Activated CD8-positive, alpha-beta T cell treated with anti-CD3 and anti-CD28 coated beads, Interleukin-2, amount 10 ng/mL, durations not matched to agents 7 days and 5 days (primary cell): ENCODE measurements at regions of chr18 and their contacts with region 1.

Region 1: DNA sequence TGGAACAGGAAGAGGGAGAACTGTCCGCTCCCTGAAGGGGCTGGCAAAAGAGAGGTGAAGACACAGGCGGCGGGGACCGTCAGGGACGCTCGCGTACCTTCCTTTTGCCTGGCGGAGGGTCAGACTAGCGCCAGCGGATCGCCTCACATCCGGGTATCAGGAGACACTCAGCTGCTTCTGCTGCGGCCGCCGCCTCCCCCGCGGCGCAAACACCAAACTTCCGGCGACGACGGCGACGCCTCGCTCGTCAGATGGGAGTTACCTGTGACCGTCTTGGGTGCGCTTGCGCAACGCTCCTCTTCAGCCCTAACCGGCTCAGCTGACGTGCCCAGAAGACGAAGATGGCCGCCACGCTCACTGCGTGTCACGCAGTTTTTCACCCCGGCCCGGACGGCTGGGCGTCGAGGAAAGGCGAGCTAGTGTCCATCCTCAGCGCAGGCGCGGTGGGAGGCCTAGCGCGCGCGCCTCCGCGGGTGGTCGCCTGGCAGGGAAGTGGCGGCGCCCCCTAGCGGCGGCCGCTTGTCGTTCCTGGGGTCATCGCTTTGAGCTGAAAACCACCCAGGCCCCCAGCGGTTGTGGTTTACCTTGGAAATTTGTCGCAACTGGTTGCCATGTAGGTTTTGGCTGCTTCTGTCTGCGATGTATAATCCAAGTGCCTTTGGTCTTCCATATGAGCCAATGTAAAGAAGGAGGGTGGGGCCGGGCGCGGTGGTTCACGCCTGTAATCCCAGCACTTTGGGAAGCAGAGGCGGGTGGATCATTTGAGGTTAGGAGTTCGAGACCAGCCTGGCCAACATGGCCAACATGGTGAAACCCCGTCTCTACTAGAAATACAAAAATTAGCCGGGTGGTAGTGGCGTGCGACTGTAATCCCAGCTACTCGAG is at the start of gene ESCO1:
- DNase-seq: peak; percentile 96
- ATAC-seq: peak; percentile 90
- H3K4me3 Mint-ChIP-seq: peak within 1 kb of the TSS; percentile 92
- H3K27ac Mint-ChIP-seq: peak within 1 kb of the TSS; percentile 98
- H3K4me1 Mint-ChIP-seq: peaks cover 35% of the 10 kb centered on the region
- H3K27me3 Mint-ChIP-seq: no peaks in the 10 kb centered on the region
- total RNA-seq, gene ESCO1: 18.1 to 20.5 TPM

Region 2: GRCh38 chr18:21281611-21282010 is 319.2 kb before region 1 on chr18:
- CTCF ChIA-PET with region 1: no interaction called
- POLR2A ChIA-PET with region 1: no interaction called
- DNase-seq: no peak
- ATAC-seq: no peak
- H3K4me3 Mint-ChIP-seq: no peak overlapping the region
- H3K27ac Mint-ChIP-seq: no peak overlapping the region
- H3K4me1 Mint-ChIP-seq: no peaks in the 10 kb centered on the region
- H3K27me3 Mint-ChIP-seq: peaks cover 4% of the 10 kb centered on the region

Region 3: GRCh38 chr18:21404410-21404809 is 196.4 kb before region 1 on chr18:
- CTCF ChIA-PET with region 1: no interaction called
- POLR2A ChIA-PET with region 1: no interaction called
- DNase-seq: no peak
- ATAC-seq: no peak
- H3K4me3 Mint-ChIP-seq: no peak overlapping the region
- H3K27ac Mint-ChIP-seq: no peak overlapping the region
- H3K4me1 Mint-ChIP-seq: no peaks in the 10 kb centered on the region
- H3K27me3 Mint-ChIP-seq: peaks cover 6% of the 10 kb centered on the region

Region 4: GRCh38 chr18:21612125-21612991 is 11.6 kb after region 1 on chr18 and contains the start of gene SNRPD1:
- CTCF ChIA-PET with region 1: interaction called, 171 read pairs
- POLR2A ChIA-PET with region 1: interaction called, 85 read pairs
- DNase-seq: peak; percentile 91
- ATAC-seq: peak; percentile 97
- H3K4me3 Mint-ChIP-seq: peak within 1 kb of the TSS; percentile 100
- H3K27ac Mint-ChIP-seq: peak within 1 kb of the TSS; percentile 100
- H3K4me1 Mint-ChIP-seq: peaks cover 33% of the 10 kb centered on the region
- H3K27me3 Mint-ChIP-seq: peaks cover 2% of the 10 kb centered on the region
- total RNA-seq, gene SNRPD1: 102 to 114 TPM

Region 5: DNA sequence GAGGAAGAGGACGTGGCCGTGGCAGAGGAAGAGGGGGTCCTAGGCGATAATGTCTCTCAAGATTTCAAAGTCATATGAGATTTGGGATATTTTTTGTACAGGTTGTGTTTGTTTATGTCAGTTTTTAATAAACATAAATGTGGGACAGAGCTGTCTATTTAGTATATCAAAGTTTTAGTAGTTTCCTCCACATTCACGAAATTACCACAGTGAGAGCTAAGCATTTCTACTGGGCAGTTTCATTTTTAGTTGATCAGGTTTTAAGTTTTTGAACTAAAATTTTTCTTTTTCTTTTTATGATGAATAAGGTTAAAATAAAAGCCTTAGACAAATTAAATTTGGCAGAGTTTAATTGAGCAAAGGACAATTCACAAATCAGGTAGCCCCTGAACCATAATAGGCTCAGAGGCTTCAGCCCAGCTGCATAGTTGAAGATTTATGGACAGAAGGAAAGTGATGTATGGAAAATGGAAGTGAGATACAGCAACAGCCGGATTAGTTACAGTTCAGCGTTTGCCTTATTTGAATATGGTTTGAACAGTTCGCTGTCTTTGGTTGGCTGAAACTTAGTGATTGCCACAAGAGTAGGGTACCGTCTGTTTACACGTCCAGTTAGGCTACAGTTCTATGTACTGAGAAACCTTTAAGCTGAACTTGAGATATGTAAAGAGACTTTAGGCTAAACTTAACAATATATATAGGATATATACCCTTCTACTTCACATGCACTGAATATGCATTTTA is 28.5 kb after region 1 on chr18:
- CTCF ChIA-PET with region 1: interaction called, 15 read pairs
- POLR2A ChIA-PET with region 1: no interaction called
- DNase-seq: no peak
- ATAC-seq: no peak
- H3K4me3 Mint-ChIP-seq: peak overlapping the region; percentile 15
- H3K27ac Mint-ChIP-seq: peak overlapping the region; percentile 75
- H3K4me1 Mint-ChIP-seq: peaks cover 22% of the 10 kb centered on the region
- H3K27me3 Mint-ChIP-seq: no peaks in the 10 kb centered on the region

Region 6: DNA sequence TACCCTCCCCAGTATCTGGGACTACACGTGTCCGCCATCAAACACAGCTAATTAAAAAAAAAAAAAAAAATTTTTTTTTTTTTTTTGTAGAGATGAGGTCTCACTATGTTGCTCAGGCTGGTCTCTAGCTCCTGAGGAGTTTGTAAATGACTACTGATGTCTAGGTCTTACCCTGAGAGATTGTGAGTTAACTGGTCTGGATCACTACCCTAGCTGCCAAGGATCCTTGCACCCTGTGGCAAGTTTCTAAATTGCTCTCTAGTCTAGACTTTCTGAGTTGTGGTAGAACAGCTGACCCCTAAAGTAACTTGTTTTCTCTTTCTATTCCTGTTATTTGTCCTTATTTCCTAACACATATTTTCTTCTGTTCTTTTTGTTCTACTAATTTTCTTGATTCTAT is 59.3 kb after region 1 on chr18:
- CTCF ChIA-PET with region 1: no interaction called
- POLR2A ChIA-PET with region 1: no interaction called
- DNase-seq: no peak
- ATAC-seq: no peak
- H3K4me3 Mint-ChIP-seq: no peak overlapping the region
- H3K27ac Mint-ChIP-seq: no peak overlapping the region
- H3K4me1 Mint-ChIP-seq: no peaks in the 10 kb centered on the region
- H3K27me3 Mint-ChIP-seq: no peaks in the 10 kb centered on the region

Region 7: DNA sequence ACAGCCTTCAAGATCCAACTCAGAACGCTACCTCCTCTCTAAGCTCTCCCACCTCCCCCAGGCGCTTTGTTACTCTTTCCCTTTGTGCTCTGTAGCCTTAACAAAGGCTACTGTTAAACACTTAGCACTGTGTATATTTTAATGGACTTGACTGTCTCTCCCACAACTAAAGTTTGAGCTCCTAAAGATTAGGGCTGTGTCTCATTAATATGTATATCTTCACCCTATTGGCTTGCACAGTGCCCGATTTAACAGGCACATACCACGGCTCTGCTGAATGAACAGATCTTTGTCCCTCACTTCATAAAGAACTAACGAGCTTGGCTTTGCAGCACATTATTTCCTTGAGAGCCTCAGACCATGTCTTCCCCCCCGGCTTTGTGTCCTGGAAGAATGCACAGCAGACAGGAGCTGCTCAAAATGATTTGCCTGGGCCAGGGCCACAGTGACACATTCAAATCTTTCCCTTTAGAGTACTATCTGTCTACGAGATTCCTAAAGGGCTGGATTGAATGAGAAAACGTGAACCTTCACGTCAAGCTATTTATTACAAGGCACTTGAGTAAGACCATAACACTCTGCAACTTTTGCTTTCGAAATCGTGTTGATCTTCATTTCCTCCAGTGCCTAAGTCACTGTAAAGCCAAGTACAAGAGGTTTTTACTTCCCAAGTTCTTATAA is 81.7 kb after region 1 on chr18:
- CTCF ChIA-PET with region 1: interaction called, 13 read pairs
- POLR2A ChIA-PET with region 1: interaction called, 3 read pairs
- DNase-seq: peak; percentile 45
- ATAC-seq: peak; percentile 93
- H3K4me3 Mint-ChIP-seq: no peak overlapping the region
- H3K27ac Mint-ChIP-seq: no peak overlapping the region
- H3K4me1 Mint-ChIP-seq: peaks cover 3% of the 10 kb centered on the region
- H3K27me3 Mint-ChIP-seq: no peaks in the 10 kb centered on the region

Region 8: GRCh38 chr18:21704603-21705364 is 104.0 kb after region 1 on chr18 and contains the start of gene ABHD3:
- CTCF ChIA-PET with region 1: interaction called, 15 read pairs
- POLR2A ChIA-PET with region 1: interaction called, 17 read pairs
- DNase-seq: peak; percentile 94
- ATAC-seq: peak; percentile 96
- H3K4me3 Mint-ChIP-seq: peak within 1 kb of the TSS; percentile 97
- H3K27ac Mint-ChIP-seq: peak within 1 kb of the TSS; percentile 97
- H3K4me1 Mint-ChIP-seq: peaks cover 41% of the 10 kb centered on the region
- H3K27me3 Mint-ChIP-seq: no peaks in the 10 kb centered on the region
- total RNA-seq, gene ABHD3: 54.0 to 57.5 TPM

Region 9: DNA sequence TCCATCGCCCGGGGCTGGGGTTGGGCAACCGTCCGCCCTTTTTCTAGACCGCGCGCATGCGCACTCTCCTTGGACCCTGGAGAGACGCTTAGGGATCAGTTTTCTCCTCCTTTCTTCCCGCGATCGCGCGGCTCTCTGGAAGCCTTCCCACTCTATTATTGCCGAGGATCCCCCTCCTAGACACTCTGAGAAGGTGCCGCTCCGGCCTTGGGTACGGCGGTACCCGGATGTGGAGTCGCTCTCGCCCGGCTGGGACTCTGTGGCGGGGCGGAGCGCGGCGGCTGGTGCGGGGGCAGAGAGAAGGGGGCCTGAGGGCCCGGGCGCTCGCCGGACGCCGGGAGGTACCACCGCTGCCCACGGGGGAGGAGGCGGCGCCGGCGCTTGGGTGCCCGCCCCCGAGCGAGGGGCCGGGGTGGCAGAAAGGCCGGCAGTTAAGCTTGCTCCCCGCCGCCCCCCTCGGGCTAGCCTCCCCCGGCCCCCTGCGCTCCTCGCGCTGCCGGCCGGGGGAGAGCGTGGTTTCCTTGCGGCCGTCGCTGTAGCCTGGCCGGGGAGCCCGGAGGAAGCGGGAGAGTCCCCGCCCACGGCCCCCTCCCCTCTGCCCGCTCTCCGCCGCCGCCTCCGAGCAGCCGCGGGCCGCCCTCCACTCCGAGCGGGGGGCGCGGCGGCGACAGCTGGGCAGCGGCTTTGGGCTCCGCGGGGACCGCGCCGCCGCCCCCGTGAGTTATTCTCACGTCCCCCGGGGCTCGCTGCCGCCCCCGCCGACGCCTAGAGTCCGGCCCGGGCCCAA is 140.1 kb after region 1 on chr18 and contains the start of gene MIB1:
- CTCF ChIA-PET with region 1: interaction called, 11 read pairs
- POLR2A ChIA-PET with region 1: interaction called, 26 read pairs
- DNase-seq: no peak
- ATAC-seq: peak; percentile 76
- H3K4me3 Mint-ChIP-seq: peak within 1 kb of the TSS; percentile 88
- H3K27ac Mint-ChIP-seq: peak within 1 kb of the TSS; percentile 94
- H3K4me1 Mint-ChIP-seq: peaks cover 42% of the 10 kb centered on the region
- H3K27me3 Mint-ChIP-seq: peaks cover 15% of the 10 kb centered on the region
- total RNA-seq, gene MIB1: 32.6 to 37.4 TPM